Caco-2 (cell line): ENCODE measurements at regions of chr16 and their contacts with region 1.

Region 1: DNA sequence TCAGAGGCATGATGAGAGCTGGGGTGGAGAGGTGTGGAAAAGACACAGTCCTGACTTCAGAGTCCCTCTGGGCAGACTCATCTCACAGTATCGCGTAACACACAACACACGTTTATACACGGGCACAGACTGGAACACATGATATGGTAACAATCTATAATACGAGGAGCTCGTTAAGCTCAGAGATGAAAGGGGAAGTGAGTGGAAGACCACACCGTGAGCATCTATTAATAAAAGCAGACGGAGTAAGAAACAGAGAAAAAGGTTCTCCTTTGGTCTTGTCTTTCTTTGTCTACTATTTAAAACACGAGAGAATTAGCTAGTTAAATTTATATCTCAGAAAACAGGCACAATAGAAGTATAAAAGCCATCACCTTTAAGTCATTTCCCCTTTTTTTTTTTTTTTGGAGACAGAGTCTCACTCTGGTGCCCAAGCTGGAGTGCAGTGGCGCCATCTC is 13.5 kb downstream of the ANKRD11 start:
- DNase-seq: no peak
- H3K4me3 ChIP-seq: no peak overlapping the region
- H3K4me3 Mint-ChIP-seq: no peak overlapping the region
- H3K27ac Mint-ChIP-seq: peak overlapping the region; percentile 17
- H3K4me1 ChIP-seq: peaks cover 69% of the 10 kb centered on the region
- H3K4me1 Mint-ChIP-seq: peaks cover 72% of the 10 kb centered on the region
- H3K27me3 ChIP-seq: no peaks in the 10 kb centered on the region
- H3K27me3 Mint-ChIP-seq: no peaks in the 10 kb centered on the region
- CTCF ChIP-seq: no peak

Region 2: DNA sequence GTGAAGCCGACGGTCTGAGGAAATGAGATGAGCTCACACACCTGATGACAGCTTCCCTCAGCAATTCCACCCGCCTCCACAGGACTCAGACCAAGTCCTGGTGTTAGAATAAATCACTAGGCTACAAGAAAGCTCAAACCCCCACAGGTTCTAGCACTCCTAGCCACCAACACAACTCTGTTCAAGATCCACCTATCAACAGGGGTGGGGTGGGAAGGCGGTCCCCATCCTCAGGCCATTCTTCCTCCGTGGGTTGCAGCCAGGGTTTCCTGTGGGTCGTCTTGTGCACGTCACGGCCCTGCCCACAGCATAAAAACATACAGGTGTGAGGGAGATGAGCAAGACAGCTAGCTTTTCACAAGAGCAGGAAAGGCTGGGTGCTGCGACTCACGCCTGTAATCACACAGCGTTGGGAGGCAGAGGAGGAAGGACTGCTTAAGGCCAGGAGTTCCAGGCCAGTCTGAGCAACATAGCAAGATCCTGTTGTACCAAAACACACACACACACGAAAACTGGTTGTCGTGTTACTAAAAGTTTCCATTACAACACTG is 67.6 kb before region 1 on chr16:
- CTCF ChIA-PET with region 1: no interaction called
- POLR2A ChIA-PET with region 1: no interaction called
- intact Hi-C with region 1: loop called (anchors 5 kb)
- DNase-seq: no peak
- H3K4me3 ChIP-seq: no peak overlapping the region
- H3K4me3 Mint-ChIP-seq: peak overlapping the region; percentile 14
- H3K27ac Mint-ChIP-seq: peak overlapping the region; percentile 81
- H3K4me1 ChIP-seq: peaks cover 79% of the 10 kb centered on the region
- H3K4me1 Mint-ChIP-seq: peaks cover 66% of the 10 kb centered on the region
- H3K27me3 ChIP-seq: no peaks in the 10 kb centered on the region
- H3K27me3 Mint-ChIP-seq: no peaks in the 10 kb centered on the region
- CTCF ChIP-seq: no peak